ENCODE measurements at regions of chr5 and their contacts with region 1.

Region 1: DNA sequence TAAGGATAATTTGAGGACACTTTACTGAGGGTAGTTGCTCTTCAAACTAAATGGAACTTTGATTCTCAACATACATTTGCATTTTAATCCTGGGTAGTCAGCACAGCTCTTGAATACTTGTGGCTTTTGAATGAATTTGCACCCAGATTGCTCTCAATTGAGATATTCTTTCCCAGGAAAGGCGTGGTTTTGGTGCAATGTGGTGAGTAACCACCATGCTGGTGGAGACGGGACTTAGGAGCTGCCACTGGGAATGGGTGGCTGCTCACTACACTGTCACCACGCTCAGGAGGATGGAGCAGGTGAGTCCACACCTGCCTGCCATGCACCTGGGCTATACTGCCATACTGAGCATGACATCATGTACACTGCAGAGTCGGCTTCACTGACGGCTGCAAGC is 99.2 kb downstream of the IRX1 start:
- DNase-seq: no peak
- H3K4me3 ChIP-seq: no peak overlapping the region
- H3K27ac ChIP-seq: no peak overlapping the region
- H3K4me1 ChIP-seq: no peaks in the 10 kb centered on the region
- H3K27me3 ChIP-seq: no peaks in the 10 kb centered on the region
- CTCF ChIP-seq: no peak
- POLR2A ChIP-seq: no peak

Region 2: GRCh38 chr5:4246447-4246846 is 551.6 kb after region 1 on chr5:
- intact Hi-C with region 1: loop called (anchors 5 kb)
- DNase-seq: no peak
- H3K4me3 ChIP-seq: no peak overlapping the region
- H3K27ac ChIP-seq: no peak overlapping the region
- H3K4me1 ChIP-seq: no peaks in the 10 kb centered on the region
- H3K27me3 ChIP-seq: no peaks in the 10 kb centered on the region
- CTCF ChIP-seq: no peak
- POLR2A ChIP-seq: no peak

Measured in uterus (tissue), 4 donors.